ENCODE measurements at regions of chr6 and their contacts with region 1.

Region 1: GRCh38 chr6:47631269-47631772 is 67.1 kb upstream of the ADGRF4 start:
- DNase-seq: no peak
- H3K4me3 Mint-ChIP-seq: no peak overlapping the region
- H3K27ac Mint-ChIP-seq: no peak overlapping the region
- H3K4me1 Mint-ChIP-seq: peaks cover 11% of the 10 kb centered on the region
- H3K27me3 Mint-ChIP-seq: no peaks in the 10 kb centered on the region

Region 2: DNA sequence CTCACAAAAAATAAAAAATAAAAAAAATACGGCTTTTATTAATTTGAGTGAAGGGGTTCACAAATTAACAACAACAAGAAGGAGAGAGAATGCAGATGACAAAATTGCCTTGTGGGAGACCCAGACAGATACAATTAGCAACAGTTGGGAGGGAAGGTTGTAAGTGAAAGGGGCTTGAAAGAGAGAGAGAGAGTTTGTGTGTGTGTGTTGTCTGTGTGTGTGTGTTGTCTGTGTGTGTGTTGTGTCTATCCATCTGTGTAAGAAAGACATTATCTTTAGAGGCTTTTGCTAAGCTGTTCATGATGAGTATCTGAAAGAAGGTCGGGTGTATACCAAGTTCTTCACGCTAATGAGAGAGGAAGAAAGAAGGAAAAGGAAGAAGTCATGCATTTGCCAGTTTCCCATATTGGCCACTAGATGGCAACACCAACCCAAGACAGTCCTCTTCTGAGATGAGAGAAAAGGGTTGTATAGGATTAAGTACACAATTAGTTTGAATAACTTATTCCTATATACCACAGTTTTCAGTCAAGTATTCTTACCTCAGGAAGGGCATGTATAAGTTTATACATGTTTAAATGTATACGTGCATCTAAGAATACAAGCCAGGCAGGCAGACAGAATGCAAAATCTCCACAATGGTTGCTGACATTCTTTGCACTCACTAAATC is 217.4 kb before region 1 on chr6:
- CTCF ChIA-PET with region 1: interaction called, 23 read pairs
- intact Hi-C with region 1: loop called (anchors 1 kb)
- DNase-seq: peak; percentile 55
- H3K4me3 Mint-ChIP-seq: peak overlapping the region; percentile 63
- H3K27ac Mint-ChIP-seq: peak overlapping the region; percentile 46
- H3K4me1 Mint-ChIP-seq: peaks cover 15% of the 10 kb centered on the region
- H3K27me3 Mint-ChIP-seq: no peaks in the 10 kb centered on the region

Region 3: DNA sequence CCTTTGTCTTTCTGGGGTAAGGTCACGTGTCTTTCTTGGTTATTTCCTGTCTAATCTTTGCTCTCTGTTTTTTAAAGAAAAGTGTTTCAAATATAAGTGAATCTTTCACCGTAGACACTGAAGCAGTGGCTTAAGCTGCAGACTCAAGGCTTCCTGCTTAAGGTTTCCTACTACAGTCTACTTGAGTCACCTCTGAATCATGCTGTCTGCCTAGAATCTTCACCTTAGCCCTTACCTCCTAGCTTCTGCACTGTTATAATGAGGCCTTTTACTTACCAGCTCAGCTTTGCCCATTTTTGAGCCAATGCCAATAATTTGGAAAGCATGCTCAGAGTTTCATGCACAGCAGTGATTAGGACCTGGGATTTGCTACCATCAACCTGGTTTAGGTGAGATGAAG is 97.7 kb after region 1 on chr6:
- CTCF ChIA-PET with region 1: interaction called, 44 read pairs
- intact Hi-C with region 1: loop called (anchors 1 kb)
- DNase-seq: peak; percentile 27
- H3K4me3 Mint-ChIP-seq: no peak overlapping the region
- H3K27ac Mint-ChIP-seq: peak overlapping the region; percentile 1
- H3K4me1 Mint-ChIP-seq: peaks cover 16% of the 10 kb centered on the region
- H3K27me3 Mint-ChIP-seq: peaks cover 5% of the 10 kb centered on the region

Region 4: DNA sequence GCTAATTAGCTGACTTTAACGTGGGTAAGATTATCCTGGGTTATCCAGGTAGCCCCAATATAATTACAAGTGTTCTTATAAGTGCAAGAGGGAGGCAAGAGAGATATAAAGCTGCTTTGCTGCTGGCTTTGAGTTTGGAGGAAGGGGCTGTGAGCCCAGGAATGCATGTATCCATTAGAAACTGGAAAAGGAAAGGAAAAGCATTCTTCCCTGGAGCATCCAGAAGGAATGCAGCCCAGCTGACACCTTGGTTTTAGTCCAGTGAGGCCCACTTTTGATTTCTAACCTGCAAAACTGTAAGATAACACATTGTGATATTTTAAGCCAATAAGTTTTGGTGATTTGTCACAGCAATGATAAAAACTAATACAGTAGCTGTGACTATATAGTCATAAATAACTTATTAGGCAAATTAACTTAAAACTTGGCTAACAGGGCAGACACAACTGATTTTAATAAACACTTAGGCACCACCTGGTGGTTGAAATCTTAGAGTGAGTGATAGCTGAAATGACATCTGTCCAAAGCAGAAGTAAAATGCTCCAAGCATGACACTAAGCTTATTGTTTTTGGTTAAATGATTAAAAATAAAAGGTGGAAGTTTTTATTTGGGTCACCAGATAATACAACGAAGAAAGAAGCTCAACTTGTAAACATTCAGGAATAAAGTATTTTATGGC is 102.7 kb after region 1 on chr6:
- CTCF ChIA-PET with region 1: interaction called, 44 read pairs
- intact Hi-C with region 1: loop called (anchors 1 kb)
- DNase-seq: peak; percentile 23
- H3K4me3 Mint-ChIP-seq: no peak overlapping the region
- H3K27ac Mint-ChIP-seq: no peak overlapping the region
- H3K4me1 Mint-ChIP-seq: peaks cover 18% of the 10 kb centered on the region
- H3K27me3 Mint-ChIP-seq: peaks cover 11% of the 10 kb centered on the region

Region 5: DNA sequence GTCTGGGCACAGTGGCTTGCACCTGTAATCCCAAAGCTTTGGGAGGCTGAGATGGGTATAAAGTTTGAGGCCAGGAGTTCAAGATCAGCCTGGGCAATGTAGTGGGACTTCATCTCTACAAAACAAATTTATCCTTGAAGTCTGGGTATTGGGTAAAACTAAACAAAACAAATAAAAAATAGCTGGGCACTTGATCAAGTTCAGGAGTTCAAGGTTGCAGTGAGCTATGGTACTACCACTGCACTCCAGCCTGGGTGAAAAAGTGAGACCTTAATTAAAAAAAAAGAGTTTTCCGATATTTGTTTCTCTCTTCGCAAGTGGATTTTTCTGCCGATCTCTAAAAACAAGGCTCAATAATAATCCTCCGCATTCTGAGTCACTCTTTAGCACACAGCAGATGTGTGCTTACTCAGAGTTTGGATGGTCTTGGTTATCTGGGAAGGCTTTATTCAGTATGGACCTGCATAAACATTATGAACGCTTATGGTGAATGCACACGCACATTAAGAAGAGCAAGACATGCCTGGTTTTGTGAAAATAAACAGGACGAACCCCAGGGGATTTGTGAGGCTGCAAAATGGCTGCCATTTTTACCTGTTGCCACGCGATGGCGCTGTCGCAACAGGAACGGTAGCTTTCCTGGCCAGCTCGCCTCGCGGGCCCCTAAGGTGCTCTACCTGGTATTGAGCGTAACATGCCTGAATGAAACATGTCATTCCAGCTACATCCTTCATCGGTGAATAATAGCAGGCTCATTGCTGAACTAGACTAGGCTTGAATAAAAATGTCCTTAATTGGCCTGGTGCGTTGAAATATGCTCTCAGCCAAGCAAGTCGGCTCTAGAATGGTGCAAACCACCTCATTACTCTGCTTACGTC is 156.5 kb after region 1 on chr6:
- CTCF ChIA-PET with region 1: interaction called, 71 read pairs
- intact Hi-C with region 1: no loop called
- DNase-seq: peak; percentile 70
- H3K4me3 Mint-ChIP-seq: no peak overlapping the region
- H3K27ac Mint-ChIP-seq: no peak overlapping the region
- H3K4me1 Mint-ChIP-seq: peaks cover 5% of the 10 kb centered on the region
- H3K27me3 Mint-ChIP-seq: peaks cover 30% of the 10 kb centered on the region

Region 6: DNA sequence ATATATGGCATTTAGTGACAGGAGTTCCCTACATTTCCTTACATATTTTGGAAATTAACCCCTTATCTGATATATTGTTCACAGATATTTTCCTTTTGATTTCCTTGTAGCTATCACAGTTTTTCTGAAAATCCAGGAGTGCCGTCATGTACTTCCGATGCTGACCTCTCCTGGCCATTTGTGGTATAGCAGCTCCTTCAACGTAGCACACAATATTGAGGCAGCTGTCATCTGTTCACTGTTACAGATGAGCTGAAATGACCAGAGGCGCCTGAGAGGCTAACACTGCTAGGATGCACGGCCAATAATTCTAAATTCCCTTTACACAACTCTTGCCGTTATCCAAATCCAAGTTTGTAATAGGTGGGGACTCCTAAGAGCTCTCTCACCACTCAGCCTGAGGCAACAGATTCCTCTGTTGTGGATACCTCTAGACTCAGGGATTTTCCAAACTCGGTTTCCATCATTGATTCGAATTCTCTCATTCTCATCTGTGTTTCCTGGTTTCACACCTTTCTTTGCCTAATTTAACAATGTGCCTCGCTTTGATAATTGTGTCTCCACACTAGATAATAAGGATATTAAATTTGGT is 1778.7 kb after region 1 on chr6:
- CTCF ChIA-PET with region 1: no interaction called
- intact Hi-C with region 1: loop called (anchors 5 kb)
- DNase-seq: peak; percentile 77
- H3K4me3 Mint-ChIP-seq: no peak overlapping the region
- H3K27ac Mint-ChIP-seq: no peak overlapping the region
- H3K4me1 Mint-ChIP-seq: no peaks in the 10 kb centered on the region
- H3K27me3 Mint-ChIP-seq: peaks cover 5% of the 10 kb centered on the region

Measured in activated naive CD4-positive, alpha-beta T cell treated with anti-CD3 and anti-CD28 coated beads for 36 hours (primary cell).